ENCODE measurements at regions of chr7 and their contacts with region 1.

Region 1: GRCh38 chr7:1579481-1580421 is 9.9 kb upstream of the PSMG3 start:
- DNase-seq: no peak
- ATAC-seq: peak; percentile 99
- H3K4me3 ChIP-seq: no peak overlapping the region
- H3K27ac ChIP-seq: no peak overlapping the region
- H3K4me1 ChIP-seq: peaks cover 0 to 8% of the 10 kb centered on the region in 2 experiments; a peak in 1 of 4 replicates
- H3K27me3 ChIP-seq: no peaks in the 10 kb centered on the region
- CTCF ChIP-seq: peak; percentile 81 to 86 (median 84)
- POLR2A ChIP-seq: no peak
- RAD21 ChIP-seq: peak; percentile 96

Region 2: DNA sequence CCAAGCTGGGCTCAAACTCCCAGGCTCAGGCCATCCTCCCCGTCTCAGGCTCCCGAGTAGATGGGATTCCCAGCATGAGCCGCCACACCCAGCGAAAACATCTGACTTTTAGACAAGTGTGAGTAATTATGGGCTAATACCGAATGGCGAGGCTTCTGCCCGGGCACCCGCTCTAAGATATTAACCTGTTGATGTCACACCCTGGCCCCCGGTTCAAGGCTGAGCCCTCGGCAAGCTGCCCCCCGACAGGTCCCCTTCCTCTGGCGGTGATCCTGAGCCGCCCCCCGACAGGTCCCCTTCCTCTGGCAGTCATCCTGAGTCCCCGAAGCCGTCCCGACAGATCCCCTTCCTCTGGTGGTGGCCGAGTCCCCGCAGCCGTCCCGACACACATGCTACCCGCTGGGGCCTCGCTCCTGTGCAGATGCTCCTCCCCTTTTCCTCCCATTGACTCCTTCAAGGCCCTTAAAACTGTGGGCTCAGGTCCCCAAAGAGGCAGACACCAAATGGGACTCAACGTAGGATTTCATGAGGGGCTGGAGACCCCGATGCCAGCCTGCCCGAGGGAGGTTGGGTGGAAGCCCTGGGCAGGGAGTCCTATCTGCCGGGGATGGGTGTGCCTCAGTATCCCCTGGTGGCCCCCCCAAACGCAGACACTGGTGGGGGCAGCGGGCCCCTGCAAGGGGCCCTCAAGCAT is 15.0 kb before region 1 on chr7:
- CTCF ChIA-PET with region 1: no interaction called
- POLR2A ChIA-PET with region 1: no interaction called
- RAD21 ChIA-PET with region 1: no interaction called
- intact Hi-C with region 1: no loop called
- DNase-seq: no peak
- ATAC-seq: peak; percentile 25; the same call in 1 of the 2 replicates
- H3K4me3 ChIP-seq: peak overlapping the region in 1 of 2 experiments; percentile 14; a peak in 2 of 4 replicates
- H3K27ac ChIP-seq: peak overlapping the region; percentile 13
- H3K4me1 ChIP-seq: peaks cover 40 to 61% of the 10 kb centered on the region in 2 experiments
- H3K27me3 ChIP-seq: no peaks in the 10 kb centered on the region
- CTCF ChIP-seq: no peak
- POLR2A ChIP-seq: no peak
- RAD21 ChIP-seq: no peak

Region 3: DNA sequence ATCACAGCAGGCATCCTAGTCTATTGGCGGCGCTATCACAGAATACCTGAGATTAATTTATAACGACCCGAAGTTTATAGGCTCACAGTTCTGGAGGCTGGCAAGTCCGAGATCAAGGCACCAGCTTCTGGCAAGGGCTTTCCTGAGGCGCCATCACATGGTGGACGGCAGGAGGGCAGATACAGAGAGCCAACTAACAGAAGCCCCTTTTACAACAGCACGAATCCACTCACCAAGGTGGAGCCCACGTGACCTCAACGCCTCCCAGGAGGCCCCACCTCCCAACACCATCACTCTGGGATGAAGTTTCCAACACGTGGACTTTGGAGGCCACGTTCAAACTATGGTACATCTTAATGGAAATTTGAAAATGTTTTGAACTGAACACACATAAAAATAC is 345.6 kb after region 1 on chr7:
- CTCF ChIA-PET with region 1: no interaction called
- POLR2A ChIA-PET with region 1: no interaction called
- RAD21 ChIA-PET with region 1: no interaction called
- intact Hi-C with region 1: loop called (anchors 2 kb)
- DNase-seq: no peak
- ATAC-seq: peak; percentile 58; the same call in 1 of the 2 replicates
- H3K4me3 ChIP-seq: no peak overlapping the region
- H3K27ac ChIP-seq: no peak overlapping the region
- H3K4me1 ChIP-seq: no peaks in the 10 kb centered on the region
- H3K27me3 ChIP-seq: no peaks in the 10 kb centered on the region
- CTCF ChIP-seq: peak in 2 of 3 experiments; percentile 27 to 31; a peak in 2 of 6 replicates
- POLR2A ChIP-seq: no peak
- RAD21 ChIP-seq: peak; percentile 47

Region 4: DNA sequence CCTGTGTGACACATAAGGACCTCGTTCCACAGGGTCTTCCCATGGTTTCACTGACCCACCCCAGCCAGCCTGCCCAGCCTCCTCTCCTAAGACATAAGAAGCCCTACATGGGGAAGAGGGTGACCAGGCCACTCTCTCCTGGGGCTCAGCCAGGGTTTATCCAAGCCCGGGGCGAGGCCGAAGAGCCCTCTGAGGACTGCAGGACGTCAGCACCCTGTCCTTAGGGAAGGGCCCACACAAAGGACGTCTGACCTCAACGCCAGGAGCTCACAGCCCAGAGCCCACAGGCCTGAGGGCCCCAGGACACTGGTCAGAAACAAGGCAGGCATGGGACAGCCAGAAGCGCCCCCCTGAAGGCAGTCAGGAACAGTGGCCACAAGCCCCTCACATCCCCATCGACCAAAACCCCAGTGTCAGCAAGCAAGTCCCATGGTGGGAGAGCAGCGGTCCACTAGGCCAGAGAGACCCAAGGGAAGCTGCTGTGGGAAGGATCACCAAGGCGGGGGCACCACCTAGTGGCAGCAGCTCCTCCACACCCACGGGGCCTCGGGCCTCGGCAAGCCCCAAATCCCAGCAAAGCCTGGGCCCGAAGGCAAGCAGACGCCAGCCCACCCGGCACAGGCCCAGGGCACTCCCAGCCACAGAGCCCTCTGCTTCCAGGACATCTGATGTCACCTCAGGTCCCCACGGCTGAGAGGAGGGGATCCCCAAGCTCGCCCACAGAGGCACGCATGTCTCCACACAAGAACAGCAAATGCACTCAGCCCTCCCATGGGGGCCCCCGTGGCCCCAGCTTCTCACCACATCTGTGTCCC is 629.6 kb after region 1 on chr7:
- CTCF ChIA-PET with region 1: no interaction called
- POLR2A ChIA-PET with region 1: no interaction called
- RAD21 ChIA-PET with region 1: no interaction called
- intact Hi-C with region 1: loop called (anchors 5 kb)
- DNase-seq: no peak
- ATAC-seq: peak; percentile 89
- H3K4me3 ChIP-seq: no peak overlapping the region
- H3K27ac ChIP-seq: no peak overlapping the region
- H3K4me1 ChIP-seq: no peaks in the 10 kb centered on the region
- H3K27me3 ChIP-seq: no peaks in the 10 kb centered on the region
- CTCF ChIP-seq: peak; percentile 44 to 64 (median 58); a peak in 5 of 6 replicates
- POLR2A ChIP-seq: no peak
- RAD21 ChIP-seq: peak; percentile 86